ENCODE measurements at regions of chr3 and their contacts with region 1.

Region 1: DNA sequence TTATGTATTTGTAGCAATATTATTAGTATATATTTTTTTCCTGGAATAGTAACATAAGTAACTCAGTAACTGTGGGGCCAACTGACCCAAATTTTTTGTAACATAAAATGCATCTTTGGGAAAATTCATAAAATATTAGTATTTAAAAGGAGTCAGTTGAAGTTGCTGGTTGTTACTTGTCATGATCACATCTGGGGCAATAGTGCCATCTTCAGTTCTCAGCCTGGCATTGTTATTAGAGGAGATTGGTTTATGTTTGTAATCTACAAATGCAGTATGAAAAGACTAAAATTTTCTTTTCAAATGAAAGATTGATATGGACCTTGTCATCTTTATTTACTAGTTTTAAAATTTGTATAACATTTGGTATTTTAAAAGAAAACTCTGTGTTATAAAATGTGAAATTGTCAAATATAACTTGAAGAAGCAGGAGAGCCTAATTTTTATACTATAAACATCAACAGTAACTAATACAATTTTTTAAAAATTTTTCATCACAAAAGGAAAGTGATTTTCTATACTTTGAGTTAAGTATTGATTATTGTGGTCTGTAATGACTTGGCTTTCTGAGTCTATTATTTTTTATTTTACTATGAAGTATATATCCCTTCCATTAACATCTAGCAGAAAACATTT is 38.8 kb upstream of the MLF1 start:
- DNase-seq: peak; percentile 9
- ATAC-seq: no peak
- H3K4me3 Mint-ChIP-seq: no peak overlapping the region
- H3K27ac Mint-ChIP-seq: no peak overlapping the region
- H3K4me1 Mint-ChIP-seq: no peaks in the 10 kb centered on the region
- H3K27me3 Mint-ChIP-seq: no peaks in the 10 kb centered on the region

Region 2: DNA sequence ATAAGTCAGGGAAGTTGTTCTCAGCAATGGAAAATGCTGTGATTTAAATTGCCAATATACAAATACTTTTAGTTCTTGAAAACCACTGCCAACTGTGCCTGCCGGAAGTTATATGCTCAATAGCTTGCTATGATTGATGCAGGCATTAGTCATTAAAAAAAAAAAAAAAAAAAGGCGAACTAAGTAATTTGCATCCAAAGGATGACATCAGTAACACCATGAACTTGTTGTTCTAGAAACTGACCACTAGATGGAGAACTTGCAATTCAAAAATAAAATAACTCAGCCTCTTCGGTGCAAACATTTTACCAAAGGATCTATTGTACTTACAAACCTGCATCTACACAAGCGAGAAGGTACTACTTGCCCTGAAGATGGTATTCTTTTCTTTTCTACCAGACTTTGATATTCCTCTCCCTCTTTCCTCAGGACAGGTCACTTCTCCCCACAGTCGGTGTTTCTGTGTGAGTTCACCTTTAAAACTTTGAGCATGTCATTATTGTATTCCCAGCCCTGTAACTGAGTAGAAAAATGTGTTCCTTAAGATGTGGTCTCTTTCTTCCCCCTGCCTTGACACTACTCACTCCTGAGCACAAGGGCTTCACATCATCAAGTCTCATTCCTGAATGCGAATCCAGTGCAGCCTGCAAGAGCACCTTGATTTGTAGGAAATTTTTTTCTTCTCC is 914.0 kb before region 1 on chr3:
- CTCF ChIA-PET with region 1: interaction called, 3 read pairs
- POLR2A ChIA-PET with region 1: no interaction called
- intact Hi-C with region 1: loop called (anchors 1 to 2 kb)
- DNase-seq: peak; percentile 49
- ATAC-seq: peak; percentile 95
- H3K4me3 Mint-ChIP-seq: no peak overlapping the region
- H3K27ac Mint-ChIP-seq: no peak overlapping the region
- H3K4me1 Mint-ChIP-seq: peaks cover 9% of the 10 kb centered on the region
- H3K27me3 Mint-ChIP-seq: peaks cover 8% of the 10 kb centered on the region

Region 3: GRCh38 chr3:158084651-158085050 is 447.6 kb before region 1 on chr3:
- CTCF ChIA-PET with region 1: no interaction called
- POLR2A ChIA-PET with region 1: no interaction called
- intact Hi-C with region 1: no loop called
- DNase-seq: no peak
- ATAC-seq: no peak
- H3K4me3 Mint-ChIP-seq: no peak overlapping the region
- H3K27ac Mint-ChIP-seq: no peak overlapping the region
- H3K4me1 Mint-ChIP-seq: no peaks in the 10 kb centered on the region
- H3K27me3 Mint-ChIP-seq: peaks cover 30% of the 10 kb centered on the region

Region 4: GRCh38 chr3:158570999-158571974 is 39.1 kb after region 1 on chr3 and contains the start of gene MLF1:
- CTCF ChIA-PET with region 1: no interaction called
- POLR2A ChIA-PET with region 1: no interaction called
- intact Hi-C with region 1: no loop called
- DNase-seq: peak; percentile 93
- ATAC-seq: peak; percentile 100
- H3K4me3 Mint-ChIP-seq: peak within 1 kb of the TSS; percentile 78
- H3K27ac Mint-ChIP-seq: peak within 1 kb of the TSS; percentile 63
- H3K4me1 Mint-ChIP-seq: peaks cover 12% of the 10 kb centered on the region
- H3K27me3 Mint-ChIP-seq: peaks cover 28% of the 10 kb centered on the region
- total RNA-seq, gene MLF1: 2.4 to 3.4 TPM